T-cell (primary cell): ENCODE measurements at regions of chr22 and their contacts with region 1.

Region 1: DNA sequence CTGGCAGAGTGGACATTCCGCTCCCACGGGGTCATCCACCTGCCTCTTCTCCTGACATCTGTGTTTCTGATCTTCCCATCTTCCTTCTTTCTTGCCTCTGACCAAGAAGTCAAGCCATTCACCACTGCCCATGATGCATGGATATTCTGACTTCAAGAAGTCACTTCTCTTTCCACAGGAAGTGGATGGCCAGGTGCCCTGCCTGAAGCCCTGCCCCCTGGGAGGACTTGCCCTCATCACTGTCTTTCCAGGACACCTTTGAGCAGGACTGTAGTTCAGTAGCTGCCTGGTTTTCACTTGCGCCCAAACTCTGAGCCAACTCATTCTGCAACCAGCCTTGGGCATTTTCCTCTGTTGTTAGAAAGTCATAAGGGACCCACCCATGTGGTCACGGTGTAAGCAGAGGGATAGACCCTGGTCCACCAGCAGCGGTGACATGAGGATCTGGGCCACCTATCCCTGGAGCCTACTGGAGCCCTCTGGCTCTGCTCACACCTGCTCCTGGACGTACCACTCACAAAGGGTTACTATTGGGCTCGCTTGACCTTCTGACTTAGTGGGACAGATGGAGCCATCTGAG is 6.9 kb downstream of the CYTH4 start:
- DNase-seq: no peak
- ATAC-seq: no peak
- H3K4me3 ChIP-seq: no peak overlapping the region
- H3K4me3 Mint-ChIP-seq: peak overlapping the region in 1 of 3 donors; percentile 25
- H3K27ac ChIP-seq: no peak overlapping the region
- H3K27ac Mint-ChIP-seq: peak overlapping the region; percentile 68 to 73
- H3K4me1 ChIP-seq: peaks cover 2 to 76% of the 10 kb centered on the region in 2 experiments
- H3K4me1 Mint-ChIP-seq: peaks cover 86 to 93% (median 87%) of the 10 kb centered on the region in 3 donors
- H3K27me3 ChIP-seq: no peaks in the 10 kb centered on the region
- H3K27me3 Mint-ChIP-seq: no peaks in the 10 kb centered on the region

Region 2: DNA sequence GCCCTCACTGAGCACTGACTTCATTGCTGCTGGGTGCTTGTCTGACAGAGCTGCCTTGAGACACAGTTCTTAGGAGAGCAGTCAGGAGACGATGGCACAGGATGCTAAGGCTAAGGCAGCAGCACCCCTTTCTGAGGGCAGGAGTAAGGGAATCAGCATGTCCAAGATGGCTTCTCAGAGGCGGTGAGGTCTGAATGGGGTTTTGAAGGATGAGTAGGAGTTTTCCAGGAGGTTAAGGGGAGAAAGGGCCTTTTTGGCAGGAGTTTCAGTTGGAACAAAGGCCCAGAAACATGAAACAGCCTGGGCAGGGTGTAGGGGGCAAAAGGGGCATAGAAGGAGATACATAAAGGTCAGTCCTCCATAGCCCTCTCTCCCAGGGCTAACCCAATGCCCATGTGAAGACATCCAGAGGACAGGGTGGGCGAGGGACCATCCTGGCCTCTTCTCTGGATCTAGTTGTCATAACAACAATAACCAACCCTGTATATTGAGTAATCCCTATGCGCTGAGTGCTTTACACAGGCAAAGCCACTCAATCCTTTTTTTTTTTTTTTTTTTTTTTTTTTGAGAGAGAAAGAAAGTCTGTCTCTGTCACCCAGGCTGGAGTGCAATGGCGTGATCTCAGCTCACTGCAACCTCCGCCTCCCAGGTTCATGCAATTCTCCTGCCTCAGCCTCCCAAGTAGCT is 12.0 kb after region 1 on chr22:
- CTCF ChIA-PET with region 1: interaction called in 1 of 2 experiments, 5 read pairs
- POLR2A ChIA-PET with region 1: interaction called in 1 of 2 experiments, 13 read pairs
- DNase-seq: no peak
- ATAC-seq: peak in 3 of 4 experiments; percentile 14 to 52 (median 38)
- H3K4me3 ChIP-seq: peak overlapping the region; percentile 4 to 10
- H3K4me3 Mint-ChIP-seq: peak overlapping the region; percentile 50 to 83 (median 58)
- H3K27ac ChIP-seq: peak overlapping the region; percentile 74
- H3K27ac Mint-ChIP-seq: peak overlapping the region; percentile 99
- H3K4me1 ChIP-seq: peaks cover 41 to 91% of the 10 kb centered on the region in 2 experiments
- H3K4me1 Mint-ChIP-seq: peaks cover 74 to 89% (median 88%) of the 10 kb centered on the region in 3 donors
- H3K27me3 ChIP-seq: no peaks in the 10 kb centered on the region
- H3K27me3 Mint-ChIP-seq: no peaks in the 10 kb centered on the region

Region 3: DNA sequence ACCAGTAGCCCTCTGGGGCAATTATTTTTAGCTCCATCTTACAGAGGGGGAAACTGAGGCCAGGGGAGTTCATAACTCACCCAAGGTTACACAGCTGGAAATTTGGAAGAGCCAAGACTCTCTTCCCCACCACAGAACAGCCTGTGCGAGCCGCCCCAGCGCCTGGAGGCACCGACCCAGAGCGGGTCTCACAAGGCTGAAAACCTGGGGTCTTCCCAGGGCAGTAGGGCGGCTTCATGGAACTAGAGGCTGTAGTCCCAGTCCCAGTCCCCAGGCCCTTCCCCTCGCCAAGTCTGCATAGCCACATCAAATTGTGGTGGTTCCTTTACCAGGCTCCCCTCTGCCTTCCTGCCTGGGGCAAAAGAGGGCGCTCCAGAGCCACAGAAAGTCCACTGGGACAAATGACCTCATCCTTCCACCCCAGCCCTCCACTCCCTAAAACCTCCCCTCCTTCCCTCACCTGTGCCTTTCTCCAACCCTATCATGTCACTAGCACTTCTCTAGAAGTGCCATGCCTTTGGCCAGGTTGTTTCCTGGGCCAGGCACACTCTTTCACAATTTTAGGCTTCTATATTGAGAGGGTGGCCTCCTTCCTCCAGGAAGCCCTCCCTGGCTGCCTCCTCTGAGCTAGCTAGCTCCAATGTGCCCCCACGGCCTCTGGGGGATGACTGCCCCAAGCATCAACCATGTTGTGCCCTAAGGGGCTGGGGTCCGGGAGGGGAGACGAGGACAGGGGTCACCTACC is 255.9 kb after region 1 on chr22:
- CTCF ChIA-PET with region 1: interaction called in 1 of 2 experiments, 11 read pairs
- POLR2A ChIA-PET with region 1: no interaction called
- DNase-seq: peak in 20 of 35 experiments; percentile 11 to 61 (median 34)
- ATAC-seq: peak; percentile 34 to 60 (median 53)
- H3K4me3 ChIP-seq: no peak overlapping the region
- H3K4me3 Mint-ChIP-seq: no peak overlapping the region
- H3K27ac ChIP-seq: no peak overlapping the region
- H3K27ac Mint-ChIP-seq: no peak overlapping the region
- H3K4me1 ChIP-seq: peaks cover 0 to 26% of the 10 kb centered on the region in 2 experiments
- H3K4me1 Mint-ChIP-seq: peaks cover 14 to 24% (median 18%) of the 10 kb centered on the region in 3 donors
- H3K27me3 ChIP-seq: peaks cover 0 to 52% of the 10 kb centered on the region in 2 experiments
- H3K27me3 Mint-ChIP-seq: peaks cover 9 to 12% of the 10 kb centered on the region in 2 donors